Activated naive CD4-positive, alpha-beta T cell treated with anti-CD3 and anti-CD28 coated beads for 36 hours (primary cell): ENCODE measurements at regions of chr1 and their contacts with region 1.

Region 1: DNA sequence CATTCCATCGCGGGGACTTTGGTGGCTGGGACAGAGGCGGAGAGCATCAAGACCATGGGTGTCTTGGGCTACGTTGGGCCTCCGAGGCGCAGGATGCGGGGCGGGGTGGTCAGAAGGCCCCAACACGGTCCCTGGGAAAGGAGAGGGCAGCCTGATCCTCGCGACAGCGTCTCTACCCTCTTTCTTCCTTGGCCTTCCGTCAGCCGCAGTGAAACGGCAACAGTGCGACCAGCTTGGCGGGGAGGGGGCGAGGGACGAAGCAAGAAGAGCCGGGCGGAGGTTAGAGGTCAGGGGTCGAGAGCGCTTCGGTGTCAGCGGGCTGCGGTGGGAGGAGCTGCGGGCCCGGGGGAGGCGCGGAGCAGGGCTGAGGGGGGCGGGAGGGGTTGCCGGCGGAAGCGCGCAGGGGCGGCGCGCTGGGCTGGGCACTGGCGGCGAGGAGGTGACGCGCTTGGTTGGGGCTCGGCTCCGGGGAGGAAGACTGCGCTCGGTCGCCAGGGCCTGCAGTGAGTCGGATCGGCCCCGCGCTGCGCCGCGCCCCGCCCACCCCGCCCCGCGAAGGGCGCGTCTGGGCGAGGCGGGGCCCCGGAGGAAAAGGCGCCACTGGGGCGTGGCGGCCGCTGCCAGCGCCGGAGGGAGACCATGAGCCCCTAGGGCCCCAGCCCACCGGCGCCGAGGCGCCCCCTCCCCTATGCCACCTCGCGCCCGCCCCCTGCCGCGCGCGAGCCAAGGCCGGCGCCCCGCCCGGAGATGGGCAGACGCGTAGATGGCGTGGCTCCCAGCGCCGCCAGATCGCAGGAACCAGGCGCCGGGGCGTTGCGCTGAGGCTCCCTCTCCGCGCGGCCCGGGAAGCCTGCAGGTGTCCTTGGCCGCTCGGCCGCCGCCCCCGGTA is at the start of gene KCNC4:
- DNase-seq: peak; percentile 92
- H3K4me3 Mint-ChIP-seq: peak within 1 kb of the TSS; percentile 86
- H3K27ac Mint-ChIP-seq: peak within 1 kb of the TSS; percentile 85
- H3K4me1 Mint-ChIP-seq: peaks cover 49% of the 10 kb centered on the region
- H3K27me3 Mint-ChIP-seq: no peaks in the 10 kb centered on the region
- total RNA-seq, gene KCNC4: 9.7 TPM

Region 2: DNA sequence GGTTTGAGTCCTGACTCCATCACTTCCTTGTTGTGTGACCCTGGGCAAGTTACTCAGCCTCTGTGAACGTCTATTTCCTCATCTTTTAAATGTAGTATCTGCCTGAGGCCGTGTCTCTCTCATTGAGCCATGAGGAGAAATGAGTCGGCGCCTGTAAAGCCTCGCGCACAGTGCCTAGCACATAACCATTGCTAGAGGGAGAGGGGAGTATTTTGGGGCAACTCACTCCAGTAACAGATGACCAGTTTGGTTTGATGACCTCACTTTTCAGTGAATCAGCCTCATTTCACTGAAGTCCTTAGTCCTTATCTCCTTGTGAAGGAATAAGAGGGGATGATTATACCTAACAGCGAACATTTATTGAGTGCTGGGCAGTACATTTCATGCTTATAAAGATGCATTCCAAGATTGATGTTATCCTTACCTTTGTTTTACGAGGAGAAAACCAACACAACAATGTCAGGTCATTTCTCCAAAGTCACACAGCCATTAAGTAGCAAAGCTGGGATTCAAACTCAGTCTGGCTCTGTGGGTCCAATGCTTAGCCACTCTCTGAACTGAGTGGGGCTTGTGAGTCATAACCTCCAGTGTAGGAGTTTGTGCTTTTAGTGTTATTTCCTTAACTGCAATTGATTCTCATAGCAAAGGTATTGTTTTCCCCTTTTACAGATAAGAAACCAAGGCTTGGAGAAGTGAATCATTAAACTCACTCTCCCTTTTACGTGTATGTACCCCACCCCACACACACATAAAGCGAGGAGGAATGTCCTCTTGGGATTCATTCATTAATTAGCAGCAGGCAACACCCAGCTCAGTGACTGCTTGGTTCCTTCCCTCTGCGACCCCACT is 26.1 kb after region 1 on chr1:
- CTCF ChIA-PET with region 1: interaction called, 24 read pairs
- intact Hi-C with region 1: loop called (anchors 1 kb)
- DNase-seq: peak; percentile 84
- H3K4me3 Mint-ChIP-seq: no peak overlapping the region
- H3K27ac Mint-ChIP-seq: peak overlapping the region; percentile 89
- H3K4me1 Mint-ChIP-seq: peaks cover 55% of the 10 kb centered on the region
- H3K27me3 Mint-ChIP-seq: no peaks in the 10 kb centered on the region

Region 3: GRCh38 chr1:110262846-110263631 is 53.1 kb after region 1 on chr1:
- CTCF ChIA-PET with region 1: interaction called, 17 read pairs
- intact Hi-C with region 1: loop called (anchors 1 kb)
- DNase-seq: peak; percentile 55
- H3K4me3 Mint-ChIP-seq: no peak overlapping the region
- H3K27ac Mint-ChIP-seq: no peak overlapping the region
- H3K4me1 Mint-ChIP-seq: peaks cover 2% of the 10 kb centered on the region
- H3K27me3 Mint-ChIP-seq: peaks cover 2% of the 10 kb centered on the region

Region 4: GRCh38 chr1:110298991-110299390 is 89.0 kb after region 1 on chr1:
- CTCF ChIA-PET with region 1: interaction called, 644 read pairs
- intact Hi-C with region 1: no loop called
- DNase-seq: no peak
- H3K4me3 Mint-ChIP-seq: no peak overlapping the region
- H3K27ac Mint-ChIP-seq: no peak overlapping the region
- H3K4me1 Mint-ChIP-seq: no peaks in the 10 kb centered on the region
- H3K27me3 Mint-ChIP-seq: peaks cover 2% of the 10 kb centered on the region

Region 5: DNA sequence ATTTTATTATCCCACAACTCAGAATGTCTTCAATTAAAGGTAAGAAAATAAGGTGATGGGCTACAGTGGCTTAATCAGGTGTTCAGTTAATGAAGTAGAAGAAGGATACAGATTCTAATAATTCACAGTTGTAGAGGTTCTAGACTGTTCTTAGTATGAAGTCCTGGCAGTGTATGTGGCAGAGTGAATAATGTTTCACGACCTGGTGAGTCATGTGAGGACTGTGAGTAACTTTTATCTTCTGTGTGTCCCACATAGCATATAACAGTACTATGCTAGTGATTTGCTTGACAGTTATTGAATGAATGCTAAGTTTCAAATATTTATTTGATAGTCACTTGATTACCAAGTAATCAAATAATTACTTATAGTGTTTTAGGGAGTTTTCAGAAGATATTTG is 160.9 kb after region 1 on chr1:
- CTCF ChIA-PET with region 1: no interaction called
- intact Hi-C with region 1: no loop called
- DNase-seq: peak; percentile 31
- H3K4me3 Mint-ChIP-seq: no peak overlapping the region
- H3K27ac Mint-ChIP-seq: no peak overlapping the region
- H3K4me1 Mint-ChIP-seq: peaks cover 16% of the 10 kb centered on the region
- H3K27me3 Mint-ChIP-seq: no peaks in the 10 kb centered on the region

Region 6: GRCh38 chr1:110407260-110408210 is 197.6 kb after region 1 on chr1 and contains the start of gene LAMTOR5:
- CTCF ChIA-PET with region 1: interaction called, 24 read pairs
- intact Hi-C with region 1: loop called (anchors 2 kb)
- DNase-seq: peak; percentile 96
- H3K4me3 Mint-ChIP-seq: peak within 1 kb of the TSS; percentile 99
- H3K27ac Mint-ChIP-seq: peak within 1 kb of the TSS; percentile 96
- H3K4me1 Mint-ChIP-seq: peaks cover 15% of the 10 kb centered on the region
- H3K27me3 Mint-ChIP-seq: no peaks in the 10 kb centered on the region
- total RNA-seq, gene LAMTOR5: 138 to 144 TPM

Region 7: GRCh38 chr1:110460253-110461220 is 250.6 kb after region 1 on chr1:
- CTCF ChIA-PET with region 1: interaction called, 123 read pairs
- intact Hi-C with region 1: no loop called
- DNase-seq: peak; percentile 93
- H3K4me3 Mint-ChIP-seq: no peak overlapping the region
- H3K27ac Mint-ChIP-seq: no peak overlapping the region
- H3K4me1 Mint-ChIP-seq: no peaks in the 10 kb centered on the region
- H3K27me3 Mint-ChIP-seq: no peaks in the 10 kb centered on the region

Region 8: DNA sequence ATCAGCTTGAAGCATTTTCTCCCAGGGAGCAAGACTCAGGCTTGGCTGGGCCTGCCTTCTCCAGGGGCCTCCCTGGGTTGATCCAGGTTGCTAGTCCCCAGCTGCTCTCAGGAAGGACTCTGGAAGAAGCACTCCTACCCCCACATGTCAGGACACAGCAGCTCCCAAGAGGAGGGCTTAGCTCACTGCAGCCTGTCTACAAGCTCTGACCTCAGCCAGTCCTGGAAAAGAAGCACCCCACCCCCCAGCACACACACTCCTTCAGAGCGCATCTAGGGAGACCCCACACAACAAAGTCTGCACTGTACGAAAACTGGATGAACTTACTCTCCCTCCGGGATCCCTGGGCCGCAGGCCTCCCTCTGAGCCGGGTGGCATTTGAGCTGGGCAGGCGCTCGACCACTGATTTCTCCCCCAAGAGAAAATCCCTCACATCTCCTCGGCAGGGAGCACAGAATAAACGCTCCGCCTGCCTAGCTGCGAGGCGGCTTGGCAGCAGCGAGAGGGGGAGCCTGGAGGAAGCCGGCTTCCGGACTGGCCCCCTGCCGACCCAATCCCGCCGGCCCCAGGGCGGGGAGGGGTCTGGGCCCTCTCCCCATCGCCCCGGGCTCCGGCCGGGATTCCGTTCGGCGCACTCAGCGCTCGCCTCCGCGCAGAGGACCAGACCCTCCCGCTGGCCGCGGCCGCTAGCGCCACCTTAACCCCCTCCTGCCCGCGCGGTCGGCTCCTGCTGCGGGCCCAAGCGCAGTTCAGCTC is 396.1 kb after region 1 on chr1 and contains the start of gene KCNA2:
- CTCF ChIA-PET with region 1: no interaction called
- intact Hi-C with region 1: no loop called
- DNase-seq: no peak
- H3K4me3 Mint-ChIP-seq: peak within 1 kb of the TSS; percentile 75
- H3K27ac Mint-ChIP-seq: no peak within 1 kb of the TSS
- H3K4me1 Mint-ChIP-seq: peaks cover 17% of the 10 kb centered on the region
- H3K27me3 Mint-ChIP-seq: peaks cover 51% of the 10 kb centered on the region
- total RNA-seq, gene KCNA2: 0.19 to 0.64 TPM